Mammary epithelial cell (primary cell): ENCODE measurements at regions of chr11 and their contacts with region 1.

Region 1: DNA sequence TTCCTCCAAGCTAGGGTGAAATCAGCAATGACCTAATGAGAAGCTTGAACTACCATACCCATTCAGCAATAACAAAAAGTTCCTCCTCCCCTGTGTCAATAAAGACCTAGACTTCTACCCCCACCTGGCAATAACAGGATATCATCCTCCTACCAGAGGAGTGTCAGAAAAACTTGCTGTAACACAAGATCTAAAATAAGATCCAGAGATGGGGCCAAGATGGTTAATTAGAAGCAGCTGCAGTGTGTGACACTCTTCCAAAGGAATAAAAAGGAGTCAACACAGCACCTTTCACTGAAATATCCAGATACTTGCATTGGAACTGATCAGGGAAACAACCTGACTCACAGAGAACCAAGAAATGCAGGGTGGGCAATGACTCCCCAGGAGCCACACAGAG is 84.4 kb upstream of the ARHGAP42 start:
- DNase-seq: no peak
- H3K4me3 ChIP-seq: no peak overlapping the region
- H3K27ac ChIP-seq: no peak overlapping the region
- H3K4me1 ChIP-seq: no peaks in the 10 kb centered on the region
- H3K27me3 ChIP-seq: no peaks in the 10 kb centered on the region
- CTCF ChIP-seq: no peak

Region 2: DNA sequence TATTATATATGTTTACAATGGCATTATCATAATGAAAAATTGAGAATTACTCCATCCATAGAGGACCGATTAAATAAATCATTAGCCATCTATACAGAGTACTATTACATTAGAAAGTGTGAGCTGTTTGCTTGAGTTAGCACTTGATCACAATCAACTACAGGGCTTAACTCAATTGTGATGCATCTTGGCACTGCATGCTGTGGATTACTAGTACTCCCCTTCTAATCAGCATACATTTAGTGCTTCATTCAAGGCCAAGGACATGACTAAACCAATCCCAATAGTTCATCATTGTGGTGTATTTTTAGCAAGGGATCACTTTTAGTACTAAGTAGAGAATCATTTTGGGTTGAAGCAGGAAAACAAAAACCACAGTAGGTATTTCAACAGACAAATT is 60.9 kb after region 1 on chr11:
- CTCF ChIA-PET with region 1: no interaction called
- dilution Hi-C with region 1: loop called (anchors 5 kb)
- in situ Hi-C with region 1: no loop called
- intact Hi-C with region 1: no loop called
- DNase-seq: no peak
- H3K4me3 ChIP-seq: no peak overlapping the region
- H3K27ac ChIP-seq: no peak overlapping the region
- H3K4me1 ChIP-seq: no peaks in the 10 kb centered on the region
- H3K27me3 ChIP-seq: no peaks in the 10 kb centered on the region
- CTCF ChIP-seq: no peak